WTC11 (cell line): ENCODE measurements at regions of chr2 and their contacts with region 1.

Region 1: DNA sequence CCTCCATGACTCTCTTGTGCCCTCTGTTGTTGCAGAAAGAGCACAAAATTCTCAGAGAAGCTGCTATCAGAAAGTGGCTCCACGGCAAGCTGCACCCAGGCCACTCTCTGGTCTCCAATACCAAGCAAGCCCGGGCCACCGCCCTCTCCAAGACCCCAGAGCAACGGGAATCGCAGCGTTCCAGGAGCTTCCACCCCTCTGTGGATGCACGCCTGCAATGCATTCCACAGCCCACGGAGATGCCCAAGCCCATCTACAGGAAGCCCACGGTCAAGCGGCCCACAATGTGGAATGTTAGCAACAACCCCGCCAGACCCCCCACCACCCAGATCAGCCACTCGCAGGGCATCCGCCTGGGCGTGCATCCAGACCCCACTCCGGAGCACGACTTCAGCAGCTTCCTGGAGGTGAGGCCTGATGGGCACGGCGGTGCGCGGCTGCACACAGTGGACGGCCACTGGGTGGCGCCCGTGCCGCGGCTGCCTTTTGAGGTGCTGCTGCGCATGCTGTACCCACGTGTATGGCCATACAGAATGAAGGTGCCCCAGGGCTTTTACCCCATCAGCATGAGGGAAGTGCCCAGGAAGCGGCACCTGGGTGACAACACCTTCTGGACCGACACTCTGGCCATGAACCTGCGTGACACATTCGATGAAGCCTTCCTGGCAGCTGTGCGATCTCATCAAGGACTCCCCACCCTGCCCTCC is 6.3 kb downstream of the ANKRD53 start:
- DNase-seq: peak; percentile 85
- ATAC-seq: peak; percentile 96
- H3K4me3 Mint-ChIP-seq: peak overlapping the region; percentile 54
- H3K27ac Mint-ChIP-seq: no peak overlapping the region
- H3K4me1 Mint-ChIP-seq: peaks cover 5% of the 10 kb centered on the region
- H3K27me3 Mint-ChIP-seq: peaks cover 14% of the 10 kb centered on the region
- CTCF ChIP-seq: peak; percentile 90

Region 2: GRCh38 chr2:70498054-70498453 is 486.7 kb before region 1 on chr2:
- CTCF ChIA-PET with region 1: no interaction called
- POLR2A ChIA-PET with region 1: no interaction called
- DNase-seq: no peak
- ATAC-seq: peak; percentile 96
- H3K4me3 Mint-ChIP-seq: no peak overlapping the region
- H3K27ac Mint-ChIP-seq: no peak overlapping the region
- H3K4me1 Mint-ChIP-seq: peaks cover 16% of the 10 kb centered on the region
- H3K27me3 Mint-ChIP-seq: peaks cover 22% of the 10 kb centered on the region
- CTCF ChIP-seq: peak; percentile 35; the same call in 1 of the 2 replicates

Region 3: GRCh38 chr2:70964596-70965386 is 19.9 kb before region 1 on chr2:
- CTCF ChIA-PET with region 1: interaction called, 42 read pairs
- POLR2A ChIA-PET with region 1: no interaction called
- DNase-seq: peak; percentile 87
- ATAC-seq: peak; percentile 79
- H3K4me3 Mint-ChIP-seq: peak overlapping the region; percentile 63
- H3K27ac Mint-ChIP-seq: no peak overlapping the region
- H3K4me1 Mint-ChIP-seq: peaks cover 3% of the 10 kb centered on the region
- H3K27me3 Mint-ChIP-seq: peaks cover 88% of the 10 kb centered on the region
- CTCF ChIP-seq: peak; percentile 72

Region 4: GRCh38 chr2:71068218-71069035 is 83.7 kb after region 1 on chr2 and contains the start of gene NAGK:
- CTCF ChIA-PET with region 1: interaction called, 25 read pairs
- POLR2A ChIA-PET with region 1: no interaction called
- DNase-seq: peak; percentile 96
- ATAC-seq: peak; percentile 83
- H3K4me3 Mint-ChIP-seq: peak within 1 kb of the TSS; percentile 97
- H3K27ac Mint-ChIP-seq: peak within 1 kb of the TSS; percentile 98
- H3K4me1 Mint-ChIP-seq: peaks cover 32% of the 10 kb centered on the region
- H3K27me3 Mint-ChIP-seq: peaks cover 2% of the 10 kb centered on the region; the same call in 1 of the 2 replicates
- CTCF ChIP-seq: no peak
- total RNA-seq, gene NAGK: 56.1 to 58.9 TPM (median 57.7 TPM) in 3 replicates

Region 5: DNA sequence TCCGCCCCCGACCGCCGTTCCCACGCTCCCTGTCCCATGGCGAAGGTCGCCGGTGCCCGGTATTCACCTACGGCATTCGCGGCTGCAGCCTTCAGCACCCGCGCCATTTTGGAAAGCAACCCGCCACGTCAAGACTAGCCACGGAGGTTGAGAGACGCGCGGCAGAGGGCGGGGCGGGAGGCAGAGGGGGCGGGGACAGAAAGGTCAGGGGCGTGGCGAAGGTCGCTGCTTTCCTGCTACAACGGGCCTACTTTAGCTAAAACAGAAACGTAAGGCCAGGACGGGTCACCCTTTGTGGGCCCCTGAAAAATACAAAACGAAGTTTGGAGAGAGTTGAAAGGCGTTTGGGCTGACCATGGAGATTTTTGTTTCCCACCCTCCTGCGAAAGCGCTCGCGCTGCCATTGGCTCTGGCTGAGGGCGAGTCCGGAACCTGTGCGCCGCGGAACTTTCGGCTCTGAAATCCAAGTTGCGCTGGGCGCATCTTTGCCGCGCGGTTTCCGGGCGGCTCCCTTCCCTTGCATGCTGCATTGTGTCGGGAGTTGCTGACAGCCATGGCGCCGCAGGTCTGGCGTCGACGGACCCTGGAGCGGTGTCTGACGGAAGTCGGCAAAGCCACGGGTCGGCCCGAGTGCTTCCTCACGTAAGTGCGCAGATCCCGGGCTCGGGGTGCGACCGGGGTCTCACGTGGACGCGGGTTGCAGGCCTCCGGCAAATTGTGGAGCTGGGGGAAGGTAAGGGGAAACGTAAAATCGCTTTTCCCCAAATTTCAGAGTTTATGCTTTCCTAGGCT is 145.6 kb after region 1 on chr2 and contains the starts of genes MCEE and MPHOSPH10:
- CTCF ChIA-PET with region 1: interaction called, 15 read pairs
- POLR2A ChIA-PET with region 1: no interaction called
- DNase-seq: peak; percentile 92
- ATAC-seq: peak; percentile 94
- H3K4me3 Mint-ChIP-seq: no peak within 1 kb of the TSS
- H3K27ac Mint-ChIP-seq: peak within 1 kb of the TSS; percentile 98
- H3K4me1 Mint-ChIP-seq: peaks cover 9% of the 10 kb centered on the region
- H3K27me3 Mint-ChIP-seq: no peaks in the 10 kb centered on the region
- CTCF ChIP-seq: no peak
- total RNA-seq, gene MCEE: 17.2 to 19.1 TPM (median 18.7 TPM) in 3 replicates
- total RNA-seq, gene MPHOSPH10: 27.8 to 36.6 TPM (median 31.4 TPM) in 3 replicates